CD8-positive, alpha-beta T cell (primary cell): ENCODE measurements at regions of chr17 and their contacts with region 1.

Region 1: DNA sequence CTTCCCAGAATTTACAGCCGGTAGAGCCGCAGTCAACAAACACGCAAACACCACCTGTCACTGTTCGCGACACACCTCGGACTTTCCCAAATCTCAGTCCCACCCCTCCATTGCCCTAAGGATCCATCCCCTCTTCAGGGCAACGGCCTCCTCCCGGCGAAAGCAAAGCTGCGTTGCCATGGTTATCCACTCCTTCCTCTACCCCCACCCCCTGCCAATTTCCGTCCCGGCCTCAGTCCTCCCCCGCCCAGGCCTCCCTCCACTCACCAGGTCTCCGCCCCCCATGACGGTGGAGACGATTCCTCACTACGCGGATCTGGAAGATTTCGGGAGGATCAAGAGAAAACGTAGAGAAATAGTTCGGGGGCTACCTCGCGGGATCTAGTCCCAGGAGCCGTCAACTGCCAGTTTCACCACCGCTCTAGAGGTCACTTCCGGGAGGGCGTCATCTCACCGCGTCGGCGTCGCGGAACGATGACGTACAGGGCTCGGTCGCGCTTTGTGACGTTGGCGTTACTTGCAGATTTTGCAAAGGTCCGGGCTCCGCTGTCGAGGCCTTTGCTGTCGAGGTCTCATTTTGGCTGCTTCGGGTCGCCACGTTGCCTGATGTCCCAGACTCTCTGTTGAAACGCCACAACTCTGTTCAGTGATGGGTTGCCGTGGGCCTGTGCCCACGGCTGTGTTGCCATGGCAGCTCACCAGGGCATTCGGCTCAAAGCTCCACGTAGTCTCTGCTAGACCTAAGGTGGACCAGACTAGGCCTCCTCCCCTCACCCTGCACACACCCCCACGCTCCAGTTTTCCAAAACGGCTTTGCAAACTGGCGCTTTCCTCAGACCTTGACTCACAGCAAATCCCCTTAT is at the start of gene CWC25:
- DNase-seq: peak; percentile 92 to 100 (median 97)
- ATAC-seq: peak; percentile 80
- H3K4me3 ChIP-seq: peak within 1 kb of the TSS; percentile 65 to 88
- H3K4me3 Mint-ChIP-seq: peak within 1 kb of the TSS; percentile 99
- H3K27ac ChIP-seq: peak within 1 kb of the TSS; percentile 97 to 98
- H3K27ac Mint-ChIP-seq: peak within 1 kb of the TSS; percentile 100
- H3K4me1 ChIP-seq: peaks cover 23% of the 10 kb centered on the region
- H3K4me1 Mint-ChIP-seq: peaks cover 35% of the 10 kb centered on the region
- H3K27me3 ChIP-seq: no peaks in the 10 kb centered on the region
- H3K27me3 Mint-ChIP-seq: no peaks in the 10 kb centered on the region
- CTCF ChIP-seq: no peak
- total RNA-seq, gene CWC25: 80.3 to 87.5 TPM

Region 2: GRCh38 chr17:38799378-38800236 is 25.5 kb before region 1 on chr17 and contains the start of gene PIP4K2B:
- CTCF ChIA-PET with region 1: no interaction called
- POLR2A ChIA-PET with region 1: no interaction called
- intact Hi-C with region 1: loop called (anchors 1 kb)
- DNase-seq: peak; percentile 58 to 93 (median 82)
- ATAC-seq: peak; percentile 76
- H3K4me3 ChIP-seq: peak within 1 kb of the TSS; percentile 88 to 95
- H3K4me3 Mint-ChIP-seq: peak within 1 kb of the TSS; percentile 91
- H3K27ac ChIP-seq: peak within 1 kb of the TSS; percentile 54 to 86
- H3K27ac Mint-ChIP-seq: peak within 1 kb of the TSS; percentile 90
- H3K4me1 ChIP-seq: peaks cover 31% of the 10 kb centered on the region
- H3K4me1 Mint-ChIP-seq: peaks cover 40% of the 10 kb centered on the region
- H3K27me3 ChIP-seq: no peaks in the 10 kb centered on the region
- H3K27me3 Mint-ChIP-seq: no peaks in the 10 kb centered on the region
- CTCF ChIP-seq: no peak
- total RNA-seq, gene PIP4K2B: 9.9 to 13.0 TPM

Region 3: DNA sequence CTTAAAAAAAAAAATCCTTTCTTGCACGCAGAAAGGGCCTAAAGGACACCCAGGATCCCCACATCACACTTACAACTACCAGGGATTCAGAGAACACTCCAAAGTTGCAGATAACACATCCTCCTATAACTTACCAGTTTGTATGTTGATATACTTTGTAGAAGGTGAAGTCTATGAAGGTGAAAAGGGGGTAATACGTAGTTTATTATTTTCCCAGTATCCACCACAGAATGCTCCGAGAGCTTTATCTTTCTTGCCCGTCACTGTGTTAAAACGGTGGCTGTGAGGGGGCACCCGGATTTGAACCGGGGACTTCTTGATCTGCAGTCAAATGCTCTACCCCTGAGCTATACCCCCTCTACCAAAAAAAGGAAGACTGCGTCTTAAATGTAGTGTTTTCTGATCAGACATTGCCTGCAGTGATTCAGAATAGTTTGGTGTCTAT is 36.3 kb after region 1 on chr17:
- CTCF ChIA-PET with region 1: no interaction called
- POLR2A ChIA-PET with region 1: no interaction called
- intact Hi-C with region 1: no loop called
- DNase-seq: peak in 1 of 9 experiments; percentile 28
- ATAC-seq: peak; percentile 40
- H3K4me3 ChIP-seq: no peak overlapping the region
- H3K4me3 Mint-ChIP-seq: no peak overlapping the region
- H3K27ac ChIP-seq: no peak overlapping the region
- H3K27ac Mint-ChIP-seq: no peak overlapping the region
- H3K4me1 ChIP-seq: no peaks in the 10 kb centered on the region
- H3K4me1 Mint-ChIP-seq: peaks cover 1% of the 10 kb centered on the region
- H3K27me3 ChIP-seq: no peaks in the 10 kb centered on the region
- H3K27me3 Mint-ChIP-seq: no peaks in the 10 kb centered on the region
- CTCF ChIP-seq: no peak